Caco-2 (cell line): ENCODE measurements at regions of chr1 and their contacts with region 1.

Region 1: GRCh38 chr1:212791676-212792395 is at the starts of genes NSL1 and TATDN3:
- DNase-seq: peak; percentile 97 to 99
- H3K4me3 ChIP-seq: peak within 1 kb of the TSS; percentile 88
- H3K4me3 Mint-ChIP-seq: peak within 1 kb of the TSS; percentile 94
- H3K27ac Mint-ChIP-seq: peak within 1 kb of the TSS; percentile 97
- H3K4me1 ChIP-seq: peaks cover 16% of the 10 kb centered on the region
- H3K4me1 Mint-ChIP-seq: peaks cover 25% of the 10 kb centered on the region
- H3K27me3 ChIP-seq: no peaks in the 10 kb centered on the region
- H3K27me3 Mint-ChIP-seq: no peaks in the 10 kb centered on the region
- CTCF ChIP-seq: no peak
- total RNA-seq, gene NSL1: 35.9 and 45.6 TPM in 2 replicates
- total RNA-seq, gene TATDN3: 9.6 and 12.4 TPM in 2 replicates

Region 2: DNA sequence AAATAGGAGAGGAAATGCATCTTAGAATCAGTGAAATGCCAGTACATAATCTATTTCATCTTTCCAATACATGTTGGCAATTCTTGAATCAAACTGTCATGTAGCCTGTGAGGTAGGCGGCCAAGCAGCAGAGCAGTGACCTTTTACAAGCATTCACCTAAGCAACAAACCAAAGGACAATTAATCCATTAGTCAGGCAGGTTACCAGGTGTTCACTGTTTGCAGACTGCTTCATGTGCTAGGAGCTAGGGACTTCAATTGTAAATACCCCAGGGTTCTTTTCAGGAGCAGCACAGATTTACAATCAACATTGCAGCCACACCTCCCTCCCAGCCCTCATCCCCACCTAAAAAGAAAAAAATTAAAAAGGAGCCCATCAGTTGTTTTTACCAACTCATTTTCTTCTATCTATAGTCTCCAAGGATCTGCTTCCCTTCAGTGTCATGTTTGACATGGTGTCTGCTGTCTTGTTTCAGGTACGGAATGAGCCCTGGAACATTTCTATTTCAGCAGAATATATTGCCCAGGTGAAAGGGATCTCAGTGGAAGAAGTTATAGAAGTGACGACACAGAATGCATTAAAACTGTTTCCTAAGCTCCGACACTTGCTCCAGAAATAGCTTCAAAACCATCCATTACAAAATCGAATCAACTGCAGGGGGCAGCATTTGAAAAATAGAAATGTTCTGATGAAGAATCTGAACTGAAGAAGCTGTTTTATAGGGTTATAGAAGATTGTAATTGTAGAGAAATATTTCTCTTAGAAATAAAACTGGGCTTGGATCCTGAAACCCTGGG is 22.9 kb after region 1 on chr1:
- CTCF ChIA-PET with region 1: no interaction called
- POLR2A ChIA-PET with region 1: no interaction called
- intact Hi-C with region 1: loop called (anchors 2 kb)
- DNase-seq: peak in 1 of 2 experiments; percentile 41
- H3K4me3 ChIP-seq: no peak overlapping the region
- H3K4me3 Mint-ChIP-seq: no peak overlapping the region
- H3K27ac Mint-ChIP-seq: no peak overlapping the region
- H3K4me1 ChIP-seq: peaks cover 7% of the 10 kb centered on the region
- H3K4me1 Mint-ChIP-seq: peaks cover 12% of the 10 kb centered on the region
- H3K27me3 ChIP-seq: no peaks in the 10 kb centered on the region
- H3K27me3 Mint-ChIP-seq: no peaks in the 10 kb centered on the region
- CTCF ChIP-seq: peak; percentile 11 to 36

Region 3: DNA sequence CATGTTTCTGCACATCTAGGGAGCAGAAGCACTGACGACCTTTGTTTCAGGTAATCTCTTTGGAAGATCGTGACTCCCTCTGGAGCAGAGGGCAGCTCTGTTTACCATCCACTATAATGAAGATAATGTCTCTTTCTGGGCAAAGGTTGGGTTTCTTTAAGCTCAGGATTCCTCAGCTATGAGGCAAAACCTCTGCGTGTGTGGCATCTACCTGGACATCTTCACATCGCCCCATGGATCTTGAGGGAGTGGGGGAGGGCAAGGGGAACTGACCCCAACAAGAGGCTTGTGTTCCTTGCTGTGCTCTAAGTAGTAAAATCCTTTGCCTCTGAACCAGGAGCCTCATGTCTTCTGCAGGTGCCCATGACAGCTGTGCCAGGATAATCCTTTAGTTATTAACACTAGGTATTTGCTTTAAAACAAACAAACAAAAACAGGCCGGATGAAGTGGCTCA is 36.0 kb after region 1 on chr1:
- CTCF ChIA-PET with region 1: no interaction called
- POLR2A ChIA-PET with region 1: interaction called, 10 read pairs
- intact Hi-C with region 1: no loop called
- DNase-seq: peak; percentile 65 to 90
- H3K4me3 ChIP-seq: no peak overlapping the region
- H3K4me3 Mint-ChIP-seq: peak overlapping the region; percentile 58
- H3K27ac Mint-ChIP-seq: peak overlapping the region; percentile 79
- H3K4me1 ChIP-seq: peaks cover 30% of the 10 kb centered on the region
- H3K4me1 Mint-ChIP-seq: peaks cover 20% of the 10 kb centered on the region
- H3K27me3 ChIP-seq: no peaks in the 10 kb centered on the region
- H3K27me3 Mint-ChIP-seq: no peaks in the 10 kb centered on the region
- CTCF ChIP-seq: no peak

Region 4: GRCh38 chr1:212852105-212852688 is 60.4 kb after region 1 on chr1:
- CTCF ChIA-PET with region 1: no interaction called
- POLR2A ChIA-PET with region 1: no interaction called
- intact Hi-C with region 1: no loop called
- DNase-seq: no peak
- H3K4me3 ChIP-seq: no peak overlapping the region
- H3K4me3 Mint-ChIP-seq: no peak overlapping the region
- H3K27ac Mint-ChIP-seq: no peak overlapping the region
- H3K4me1 ChIP-seq: peaks cover 4% of the 10 kb centered on the region; the same call in 1 of the 2 replicates
- H3K4me1 Mint-ChIP-seq: peaks cover 13% of the 10 kb centered on the region
- H3K27me3 ChIP-seq: no peaks in the 10 kb centered on the region
- H3K27me3 Mint-ChIP-seq: no peaks in the 10 kb centered on the region
- CTCF ChIP-seq: no peak

Region 5: DNA sequence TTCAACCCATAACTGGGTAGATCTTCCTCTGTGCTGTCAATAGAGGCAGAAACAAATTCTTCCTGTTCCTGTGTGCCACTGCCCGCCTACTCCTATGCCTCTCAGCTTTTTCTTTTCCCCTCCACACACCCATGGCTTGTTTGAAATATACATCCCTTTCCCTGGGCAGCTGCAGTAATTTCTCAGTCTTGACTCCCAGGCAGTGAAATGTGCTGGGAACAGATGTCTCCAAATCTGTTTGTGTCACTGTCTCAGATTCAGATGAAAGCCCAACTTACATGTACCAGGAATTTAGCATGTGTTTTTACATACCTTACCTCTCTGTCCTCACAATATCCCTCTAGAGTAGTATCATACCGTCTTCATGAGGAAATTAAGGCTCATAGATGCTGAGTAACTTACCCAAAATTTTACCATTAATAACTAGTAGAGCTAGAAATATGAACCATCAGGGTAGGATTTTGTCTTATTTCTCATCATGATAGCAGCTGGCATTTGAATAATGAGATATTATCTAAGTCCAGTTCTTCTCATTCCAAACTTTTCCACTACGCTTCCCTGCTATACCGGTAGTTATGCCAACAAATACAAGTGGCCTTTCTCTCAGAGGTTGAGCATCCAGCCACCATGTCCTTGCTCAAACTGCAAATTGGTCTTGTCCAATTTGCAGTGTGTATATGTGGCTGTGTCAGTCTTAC is 153.8 kb after region 1 on chr1:
- CTCF ChIA-PET with region 1: no interaction called
- POLR2A ChIA-PET with region 1: no interaction called
- intact Hi-C with region 1: no loop called
- DNase-seq: no peak
- H3K4me3 ChIP-seq: no peak overlapping the region
- H3K4me3 Mint-ChIP-seq: no peak overlapping the region
- H3K27ac Mint-ChIP-seq: no peak overlapping the region
- H3K4me1 ChIP-seq: no peaks in the 10 kb centered on the region
- H3K4me1 Mint-ChIP-seq: peaks cover 6% of the 10 kb centered on the region
- H3K27me3 ChIP-seq: no peaks in the 10 kb centered on the region
- H3K27me3 Mint-ChIP-seq: no peaks in the 10 kb centered on the region
- CTCF ChIP-seq: no peak